IMR-90 (cell line): ENCODE measurements at regions of chr4 and their contacts with region 1.

Region 1: DNA sequence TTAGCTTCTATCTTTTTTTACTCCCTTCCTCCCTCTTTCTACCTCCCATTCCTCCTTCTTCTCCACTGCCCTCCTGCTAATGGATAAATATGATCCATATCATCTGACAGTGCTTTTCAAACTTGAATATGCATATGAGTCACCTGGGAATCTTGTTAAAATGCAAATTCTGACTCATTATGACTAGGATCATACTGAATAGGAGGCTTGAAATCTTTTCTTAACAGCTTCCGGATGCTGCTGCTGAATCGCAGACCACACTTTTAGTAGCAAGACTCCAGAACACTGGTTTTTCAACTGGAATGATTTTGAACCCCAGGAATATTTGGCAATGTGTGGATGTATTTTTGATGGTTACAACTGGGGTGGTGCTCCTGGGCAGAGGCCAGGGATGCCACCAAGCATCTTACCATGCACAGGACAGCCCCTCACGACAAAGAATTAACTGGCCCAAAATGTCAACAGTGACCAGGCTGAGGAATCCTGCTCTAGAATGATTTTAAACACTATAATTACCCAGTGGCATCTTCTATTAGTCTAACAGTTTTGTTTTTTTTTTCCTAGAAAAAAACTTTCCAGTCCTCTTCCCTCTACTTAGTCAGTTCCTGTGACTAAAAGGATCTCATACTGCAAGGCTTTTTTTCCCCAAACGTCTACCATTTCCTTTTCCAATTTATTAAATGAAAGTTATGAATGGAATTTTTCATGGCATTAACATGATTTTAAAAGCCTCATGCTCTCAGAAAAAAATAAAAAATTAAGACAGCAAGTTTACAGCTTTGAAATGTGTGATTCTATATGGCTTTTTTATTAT is 10.6 kb upstream of the PYURF start:
- DNase-seq: peak; percentile 94
- ATAC-seq: peak; percentile 76
- H3K4me3 ChIP-seq: no peak overlapping the region
- H3K27ac ChIP-seq: peak overlapping the region; percentile 96
- H3K4me1 ChIP-seq: peaks cover 4% of the 10 kb centered on the region
- H3K27me3 ChIP-seq: no peaks in the 10 kb centered on the region
- CTCF ChIP-seq: no peak
- POLR2A ChIP-seq: peak; percentile 56; the same call in 1 of the 2 replicates
- RAD21 ChIP-seq: no peak

Region 2: GRCh38 chr4:88591787-88592599 is 57.8 kb after region 1 on chr4 and contains the start of gene HERC3:
- CTCF ChIA-PET with region 1: interaction called, 9 read pairs
- POLR2A ChIA-PET with region 1: no interaction called
- dilution Hi-C with region 1: no loop called
- in situ Hi-C with region 1: no loop called
- intact Hi-C with region 1: loop called (anchors 5 kb)
- DNase-seq: peak; percentile 80
- ATAC-seq: peak; percentile 98
- H3K4me3 ChIP-seq: peak within 1 kb of the TSS; percentile 62
- H3K27ac ChIP-seq: peak within 1 kb of the TSS; percentile 60
- H3K4me1 ChIP-seq: peaks cover 4% of the 10 kb centered on the region; the same call in 1 of the 2 replicates
- H3K27me3 ChIP-seq: no peaks in the 10 kb centered on the region
- CTCF ChIP-seq: 0 out of 2 replicates have a peak, but pooled peaks have one; percentile 11
- POLR2A ChIP-seq: peak; percentile 43; the same call in 1 of the 2 replicates
- RAD21 ChIP-seq: no peak
- total RNA-seq, gene HERC3: 9.5 and 13.1 TPM in 2 replicates

Region 3: DNA sequence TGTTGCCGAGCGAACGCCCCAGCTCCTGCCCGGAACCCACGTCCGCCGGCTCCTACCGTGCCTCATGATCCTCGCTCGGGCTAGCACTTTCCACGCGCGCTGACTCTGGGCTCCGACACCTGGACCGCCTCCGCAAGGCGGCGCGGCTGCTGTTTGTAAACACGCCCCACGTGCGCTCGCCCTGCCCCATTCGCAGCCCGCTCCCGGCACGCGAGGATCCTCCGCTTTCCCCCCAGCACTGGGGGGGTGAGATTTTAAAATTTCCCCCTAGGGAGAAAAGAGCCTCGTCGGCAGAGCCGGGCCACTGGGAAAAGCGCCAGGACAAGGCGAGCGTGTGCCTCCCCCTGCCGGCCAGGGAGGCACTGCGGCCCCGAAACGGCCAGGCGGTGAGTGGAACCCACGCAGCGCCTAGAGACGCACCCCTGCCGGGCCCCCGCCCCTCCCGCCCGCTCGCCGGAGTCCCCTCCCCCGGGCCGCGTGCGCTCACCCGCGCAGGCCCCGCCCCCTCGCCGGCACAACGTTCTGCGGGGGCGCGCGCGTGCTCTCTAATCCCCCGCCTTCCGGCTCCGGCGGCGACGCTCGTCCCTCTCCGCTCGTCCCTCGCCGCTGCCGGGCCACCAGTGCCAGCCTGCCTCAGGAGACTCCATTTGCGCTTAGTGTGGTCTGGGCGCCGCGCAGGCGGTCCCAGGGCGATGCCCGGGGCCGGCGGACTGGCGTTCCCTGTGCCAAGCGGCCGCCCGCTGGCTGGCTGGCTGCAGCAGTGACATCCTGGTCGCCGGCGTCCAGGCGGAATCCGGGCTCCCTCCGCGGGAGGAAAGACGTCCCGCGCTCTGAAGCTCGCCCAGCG is 577.1 kb after region 1 on chr4 and contains the start of gene TIGD2:
- CTCF ChIA-PET with region 1: no interaction called
- POLR2A ChIA-PET with region 1: no interaction called
- dilution Hi-C with region 1: no loop called
- in situ Hi-C with region 1: loop called (anchors 10 kb)
- intact Hi-C with region 1: loop called (anchors 5 kb)
- DNase-seq: peak; percentile 81
- ATAC-seq: peak; percentile 96
- H3K4me3 ChIP-seq: peak within 1 kb of the TSS; percentile 94
- H3K27ac ChIP-seq: peak within 1 kb of the TSS; percentile 89
- H3K4me1 ChIP-seq: 0 out of 2 replicates have a peak, but pooled peaks cover 2% of the 10 kb centered on the region
- H3K27me3 ChIP-seq: peaks cover 24% of the 10 kb centered on the region
- CTCF ChIP-seq: peak; percentile 69
- POLR2A ChIP-seq: no peak
- RAD21 ChIP-seq: peak; percentile 51
- total RNA-seq, gene TIGD2: 12.4 and 16.4 TPM in 2 replicates